ENCODE measurements at regions of chr9 and their contacts with region 1.

Region 1: DNA sequence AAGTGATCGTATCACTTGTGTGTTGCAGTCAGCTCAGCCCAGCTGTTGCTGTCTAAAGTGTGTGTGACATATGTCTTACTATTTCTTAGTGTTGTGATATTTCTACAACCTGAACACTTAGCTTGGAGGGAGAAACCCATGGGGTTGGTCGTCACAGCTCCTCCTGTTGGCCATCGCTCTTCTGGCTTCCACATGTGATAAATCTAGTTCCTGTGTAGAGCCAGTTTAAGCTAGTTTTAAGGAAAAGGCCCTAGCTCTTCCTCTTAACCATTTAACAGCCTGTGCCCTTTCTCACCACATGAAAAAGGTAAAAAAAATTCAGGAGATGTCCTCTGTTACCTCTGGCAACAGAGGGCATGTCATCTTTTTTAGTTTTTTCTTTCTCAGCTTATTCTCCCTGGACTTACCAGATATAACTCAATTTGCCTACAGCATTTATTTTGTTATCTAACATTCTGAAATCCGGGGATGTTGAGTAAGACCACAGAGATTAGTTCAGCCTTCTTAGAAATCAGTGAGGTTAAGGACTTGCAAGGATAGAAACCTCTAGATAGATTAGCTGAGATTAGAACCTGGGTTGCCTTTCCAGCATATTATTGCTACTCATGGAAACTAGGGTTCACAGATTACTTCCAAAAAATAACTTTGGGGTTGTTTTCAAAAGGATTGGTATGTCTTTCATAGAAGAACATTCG is 100.4 kb downstream of the GAPVD1 start:
- DNase-seq: no peak
- ATAC-seq: no peak
- H3K4me3 Mint-ChIP-seq: no peak overlapping the region
- H3K27ac Mint-ChIP-seq: peak overlapping the region; percentile 6
- H3K4me1 Mint-ChIP-seq: peaks cover 5% of the 10 kb centered on the region
- H3K27me3 Mint-ChIP-seq: no peaks in the 10 kb centered on the region

Region 2: GRCh38 chr9:125343518-125344275 is 18.3 kb before region 1 on chr9:
- CTCF ChIA-PET with region 1: no interaction called
- DNase-seq: no peak
- ATAC-seq: no peak
- H3K4me3 Mint-ChIP-seq: no peak overlapping the region
- H3K27ac Mint-ChIP-seq: no peak overlapping the region
- H3K4me1 Mint-ChIP-seq: peaks cover 7% of the 10 kb centered on the region
- H3K27me3 Mint-ChIP-seq: no peaks in the 10 kb centered on the region

Region 3: GRCh38 chr9:125374443-125375309 is 12.7 kb after region 1 on chr9:
- CTCF ChIA-PET with region 1: interaction called, 19 read pairs
- DNase-seq: peak; percentile 79
- ATAC-seq: peak; percentile 98
- H3K4me3 Mint-ChIP-seq: peak overlapping the region; percentile 43
- H3K27ac Mint-ChIP-seq: no peak overlapping the region
- H3K4me1 Mint-ChIP-seq: peaks cover 6% of the 10 kb centered on the region
- H3K27me3 Mint-ChIP-seq: no peaks in the 10 kb centered on the region